Gastrocnemius medialis (tissue), 4 donors: ENCODE measurements at regions of chr5 and their contacts with region 1.

Region 1: GRCh38 chr5:172764849-172765765 is 5.9 kb downstream of the DUSP1 start:
- DNase-seq: peak; percentile 91 to 95
- ATAC-seq: peak; percentile 53 to 60
- H3K4me3 ChIP-seq: peak overlapping the region; percentile 66 to 98 (median 83)
- H3K27ac ChIP-seq: peak overlapping the region; percentile 96 to 99 (median 96)
- H3K4me1 ChIP-seq: peaks cover 19 to 22% of the 10 kb centered on the region in 2 donors
- H3K27me3 ChIP-seq: no peaks in the 10 kb centered on the region
- CTCF ChIP-seq: peak in 2 of 5 experiments; percentile 14 to 28
- POLR2A ChIP-seq: no peak

Region 2: GRCh38 chr5:172622091-172623046 is 142.7 kb before region 1 on chr5:
- in situ Hi-C with region 1: no loop called
- intact Hi-C with region 1: no loop called
- DNase-seq: no peak
- ATAC-seq: no peak
- H3K4me3 ChIP-seq: no peak overlapping the region
- H3K27ac ChIP-seq: peak overlapping the region in 1 of 4 donors; percentile 9
- H3K4me1 ChIP-seq: no peaks in the 10 kb centered on the region
- H3K27me3 ChIP-seq: no peaks in the 10 kb centered on the region
- CTCF ChIP-seq: no peak
- POLR2A ChIP-seq: no peak

Region 3: DNA sequence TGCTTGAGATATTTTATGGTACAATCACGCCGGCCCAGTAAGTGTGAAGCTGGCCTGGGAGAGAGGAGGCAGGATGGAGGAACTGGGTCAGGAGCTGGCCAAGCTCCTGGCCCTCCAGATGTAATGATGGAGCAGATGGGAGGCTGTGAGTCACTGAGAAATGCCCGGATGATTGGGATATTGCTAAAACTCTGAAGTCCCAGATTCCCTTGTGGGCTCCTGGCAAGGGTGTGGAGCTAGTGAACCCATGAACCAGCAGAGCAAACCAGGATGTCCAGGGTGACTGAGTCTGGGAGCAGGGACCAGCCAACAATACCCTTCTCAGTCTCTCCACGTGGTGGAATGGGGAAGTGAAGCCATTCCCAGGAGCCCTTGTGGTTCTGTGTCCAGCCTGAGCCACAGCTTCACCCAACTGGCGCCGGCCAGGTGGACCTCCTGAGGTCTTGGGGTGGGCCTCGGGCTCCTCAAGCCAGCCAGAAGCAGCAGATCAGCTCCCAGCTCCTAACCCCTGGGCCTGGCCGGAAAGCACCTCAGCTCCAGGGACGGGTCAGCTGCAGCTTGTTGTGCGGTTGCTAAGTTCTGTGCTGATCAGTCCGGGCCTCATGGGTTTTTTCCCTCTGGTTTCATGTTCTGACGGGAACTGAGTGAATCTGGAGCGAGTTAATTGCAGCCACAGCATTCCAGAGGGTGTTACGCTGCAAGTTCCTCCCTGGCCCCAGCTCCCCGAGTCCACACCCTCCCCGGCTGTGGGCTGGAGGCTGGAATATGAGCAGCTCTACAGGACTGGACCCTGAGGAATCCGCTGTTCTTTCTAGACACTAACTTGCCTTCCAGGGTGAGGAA is 31.8 kb before region 1 on chr5:
- in situ Hi-C with region 1: no loop called
- intact Hi-C with region 1: loop called (anchors 5 kb)
- DNase-seq: peak; percentile 75 to 80
- ATAC-seq: peak; percentile 78 to 82
- H3K4me3 ChIP-seq: peak overlapping the region in 3 of 4 donors; percentile 11 to 20 (median 13)
- H3K27ac ChIP-seq: peak overlapping the region; percentile 86 to 89 (median 87)
- H3K4me1 ChIP-seq: peaks cover 21 to 44% of the 10 kb centered on the region in 2 donors
- H3K27me3 ChIP-seq: no peaks in the 10 kb centered on the region
- CTCF ChIP-seq: peak in 2 of 5 experiments; percentile 7 to 13
- POLR2A ChIP-seq: peak; percentile 10 to 46

Region 4: GRCh38 chr5:172795318-172795977 is 30.3 kb after region 1 on chr5:
- in situ Hi-C with region 1: no loop called
- intact Hi-C with region 1: no loop called
- DNase-seq: peak; percentile 94 to 96
- ATAC-seq: peak; percentile 78 to 88
- H3K4me3 ChIP-seq: peak overlapping the region in 2 of 4 donors; percentile 5 to 7
- H3K27ac ChIP-seq: peak overlapping the region; percentile 88 to 92 (median 90)
- H3K4me1 ChIP-seq: peaks cover 52 to 60% of the 10 kb centered on the region in 2 donors
- H3K27me3 ChIP-seq: no peaks in the 10 kb centered on the region
- CTCF ChIP-seq: peak in 3 of 5 experiments; percentile 26 to 39 (median 34)
- POLR2A ChIP-seq: peak in 1 of 2 donors; percentile 63

Region 5: DNA sequence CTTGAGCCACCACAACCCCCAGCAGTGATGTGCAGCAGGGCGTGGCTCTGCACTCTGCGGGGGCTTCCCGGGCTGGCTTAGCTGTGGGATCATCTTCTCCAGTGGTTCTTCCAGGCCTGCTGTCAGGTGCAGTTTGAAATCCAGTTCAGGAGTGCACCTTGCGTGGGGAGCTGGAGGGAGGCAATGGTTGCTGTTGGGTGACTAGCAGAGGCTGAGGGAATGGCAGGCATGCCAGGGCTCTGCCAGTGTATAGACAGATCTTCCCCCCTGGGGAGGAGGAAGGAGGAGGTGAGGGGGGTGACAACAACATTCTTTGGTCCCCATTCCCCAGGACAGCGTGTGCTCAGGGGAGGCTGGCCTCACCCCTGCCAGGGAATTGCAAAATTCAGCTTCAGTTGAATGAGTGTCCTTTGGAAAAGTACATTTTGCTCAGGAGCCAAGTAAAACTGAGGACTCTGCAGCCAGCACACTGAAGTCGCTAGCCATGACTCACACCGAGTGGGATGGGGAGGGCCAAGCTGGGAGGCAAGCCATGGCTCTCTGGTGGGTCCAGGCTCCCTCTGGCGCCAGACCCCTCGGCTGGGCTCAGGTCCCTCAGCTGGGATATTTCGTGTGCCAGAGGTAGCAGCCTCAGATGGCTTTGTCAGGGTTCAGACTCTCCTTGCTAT is 104.0 kb after region 1 on chr5:
- in situ Hi-C with region 1: loop called in 3 of 4 experiments (anchors 5 to 10 kb)
- intact Hi-C with region 1: no loop called
- DNase-seq: peak; percentile 94 to 97
- ATAC-seq: peak; percentile 65 to 67
- H3K4me3 ChIP-seq: peak overlapping the region in 3 of 4 donors; percentile 6 to 23 (median 18)
- H3K27ac ChIP-seq: peak overlapping the region; percentile 85 to 98 (median 94)
- H3K4me1 ChIP-seq: peaks cover 93 to 95% of the 10 kb centered on the region in 2 donors
- H3K27me3 ChIP-seq: no peaks in the 10 kb centered on the region
- CTCF ChIP-seq: peak in 4 of 5 experiments; percentile 41 to 52 (median 45)
- POLR2A ChIP-seq: peak; percentile 9 to 68

Region 6: GRCh38 chr5:172943283-172943841 is 178.3 kb after region 1 on chr5:
- in situ Hi-C with region 1: no loop called
- intact Hi-C with region 1: no loop called
- DNase-seq: no peak
- ATAC-seq: no peak
- H3K4me3 ChIP-seq: no peak overlapping the region
- H3K27ac ChIP-seq: no peak overlapping the region
- H3K4me1 ChIP-seq: no peaks in the 10 kb centered on the region
- H3K27me3 ChIP-seq: no peaks in the 10 kb centered on the region
- CTCF ChIP-seq: no peak
- POLR2A ChIP-seq: no peak